PC-3 (cell line): ENCODE measurements at regions of chr4 and their contacts with region 1.

Region 1: DNA sequence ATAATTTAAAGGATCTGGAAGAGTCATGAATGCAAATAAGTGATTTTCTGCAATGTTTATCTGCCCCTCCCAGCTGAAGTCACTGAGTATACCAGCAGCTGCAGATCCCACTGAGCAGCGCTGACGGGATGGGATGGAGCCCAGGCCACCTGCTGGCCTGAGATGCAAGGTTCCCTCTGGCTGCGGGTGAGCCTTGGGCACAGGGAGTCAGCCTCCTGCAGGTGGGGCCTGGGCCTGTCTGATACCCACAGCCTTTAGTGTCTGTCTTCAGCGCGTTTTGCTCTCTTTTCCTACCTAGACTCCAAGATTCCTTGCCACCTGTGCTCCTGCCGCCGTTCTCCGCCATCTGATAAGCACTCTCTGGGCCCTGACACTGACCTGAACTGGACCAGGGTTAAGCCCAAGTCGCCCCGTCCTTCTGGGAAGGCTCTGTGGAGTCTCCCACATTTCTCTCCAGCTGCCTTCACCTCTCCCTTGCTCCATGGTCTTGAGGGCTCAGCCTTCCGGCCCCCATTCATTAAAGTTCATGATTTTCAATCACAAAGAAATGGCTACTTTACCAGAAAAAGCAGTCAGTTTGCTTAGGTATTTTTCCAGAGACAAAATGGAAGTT is 223.1 kb upstream of the FAT1 start:
- DNase-seq: peak; percentile 81
- ATAC-seq: peak; percentile 100
- H3K4me3 ChIP-seq: no peak overlapping the region
- H3K27ac ChIP-seq: no peak overlapping the region
- H3K4me1 ChIP-seq: no peaks in the 10 kb centered on the region
- H3K27me3 ChIP-seq: no peaks in the 10 kb centered on the region
- CTCF ChIP-seq: peak; percentile 75

Region 2: GRCh38 chr4:186999686-187000085 is 52.9 kb after region 1 on chr4:
- CTCF ChIA-PET with region 1: no interaction called
- POLR2A ChIA-PET with region 1: no interaction called
- intact Hi-C with region 1: no loop called
- DNase-seq: no peak
- ATAC-seq: no peak
- H3K4me3 ChIP-seq: no peak overlapping the region
- H3K27ac ChIP-seq: no peak overlapping the region
- H3K4me1 ChIP-seq: no peaks in the 10 kb centered on the region
- H3K27me3 ChIP-seq: no peaks in the 10 kb centered on the region
- CTCF ChIP-seq: no peak

Region 3: GRCh38 chr4:187598196-187598595 is 651.4 kb after region 1 on chr4:
- CTCF ChIA-PET with region 1: no interaction called
- POLR2A ChIA-PET with region 1: no interaction called
- intact Hi-C with region 1: loop called (anchors 10 kb)
- DNase-seq: no peak
- ATAC-seq: no peak
- H3K4me3 ChIP-seq: no peak overlapping the region
- H3K27ac ChIP-seq: no peak overlapping the region
- H3K4me1 ChIP-seq: peaks cover 17% of the 10 kb centered on the region
- H3K27me3 ChIP-seq: no peaks in the 10 kb centered on the region
- CTCF ChIP-seq: no peak

Region 4: GRCh38 chr4:187666697-187667494 is 720.1 kb after region 1 on chr4:
- CTCF ChIA-PET with region 1: no interaction called
- POLR2A ChIA-PET with region 1: no interaction called
- intact Hi-C with region 1: no loop called
- DNase-seq: no peak
- ATAC-seq: no peak
- H3K4me3 ChIP-seq: no peak overlapping the region
- H3K27ac ChIP-seq: no peak overlapping the region
- H3K4me1 ChIP-seq: no peaks in the 10 kb centered on the region
- H3K27me3 ChIP-seq: no peaks in the 10 kb centered on the region
- CTCF ChIP-seq: no peak